ENCODE measurements at regions of chr10 and their contacts with region 1.

Region 1: GRCh38 chr10:74145133-74145532 is 5.5 kb downstream of the AP3M1 start:
- DNase-seq: no peak
- H3K4me3 ChIP-seq: no peak overlapping the region
- H3K27ac ChIP-seq: no peak overlapping the region
- H3K4me1 ChIP-seq: peaks cover 8% of the 10 kb centered on the region
- H3K27me3 ChIP-seq: no peaks in the 10 kb centered on the region
- CTCF ChIP-seq: no peak

Region 2: GRCh38 chr10:74088722-74089121 is 56.4 kb before region 1 on chr10:
- CTCF ChIA-PET with region 1: no interaction called
- POLR2A ChIA-PET with region 1: interaction called, 20 read pairs
- intact Hi-C with region 1: no loop called
- DNase-seq: no peak
- H3K4me3 ChIP-seq: no peak overlapping the region
- H3K27ac ChIP-seq: no peak overlapping the region
- H3K4me1 ChIP-seq: no peaks in the 10 kb centered on the region
- H3K27me3 ChIP-seq: no peaks in the 10 kb centered on the region
- CTCF ChIP-seq: no peak